K562 (cell line): ENCODE measurements at regions of chr19 and their contacts with region 1.

Region 1: DNA sequence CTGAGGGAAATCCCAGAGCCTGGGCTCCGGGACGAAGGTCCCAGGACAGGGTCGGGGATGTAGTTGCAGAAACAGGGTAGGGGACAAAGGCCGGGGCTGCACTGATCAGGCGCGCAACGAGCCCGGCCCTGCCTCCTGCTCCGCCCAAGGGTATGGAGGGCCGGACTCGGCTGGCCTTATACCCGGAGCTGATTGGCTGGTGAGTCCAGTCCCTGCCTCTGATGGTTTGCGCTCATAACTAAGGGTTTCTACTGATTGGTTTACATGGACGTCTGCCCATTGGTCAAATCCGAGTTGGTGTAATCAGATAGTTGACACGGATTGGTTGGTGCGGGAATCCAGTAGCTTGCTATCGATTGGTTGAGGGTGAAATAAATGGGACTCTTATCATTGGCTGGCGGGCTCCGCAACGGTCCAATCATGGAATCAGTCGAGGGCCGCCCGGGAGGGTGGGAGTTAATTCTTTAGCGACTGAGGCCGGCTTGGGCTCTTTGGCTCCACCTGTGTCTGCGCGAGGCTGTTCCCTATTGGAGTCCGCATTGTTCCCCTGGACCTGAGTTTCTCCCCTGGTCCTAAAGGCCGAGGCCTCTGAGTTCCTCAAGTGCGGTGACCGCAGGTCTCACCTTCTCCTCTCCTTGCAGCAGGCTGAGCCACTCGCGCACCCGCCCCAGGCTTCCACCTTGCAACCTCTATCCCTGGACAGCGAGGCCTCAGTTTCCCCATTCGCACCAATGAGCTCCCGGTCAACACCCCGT is 570 bp upstream of the MPND start:
- DNase-seq: peak; percentile 94 to 99 (median 96)
- ATAC-seq: peak; percentile 96
- H3K4me3 ChIP-seq: peak overlapping the region; percentile 77
- H3K27ac ChIP-seq: peak overlapping the region; percentile 89
- H3K4me1 ChIP-seq: peaks cover 13 to 41% of the 10 kb centered on the region in 2 experiments; a peak in 4 of 5 replicates
- H3K27me3 ChIP-seq: no peaks in the 10 kb centered on the region
- CTCF ChIP-seq: peak; percentile 42 to 53 (median 51); a peak in 5 of 6 replicates
- EP300 ChIP-seq: 0 out of 2 replicates have a peak, but pooled peaks have one; percentile 4
- POLR2A ChIP-seq: peak; percentile 87
- RAD21 ChIP-seq: no peak

Region 2: DNA sequence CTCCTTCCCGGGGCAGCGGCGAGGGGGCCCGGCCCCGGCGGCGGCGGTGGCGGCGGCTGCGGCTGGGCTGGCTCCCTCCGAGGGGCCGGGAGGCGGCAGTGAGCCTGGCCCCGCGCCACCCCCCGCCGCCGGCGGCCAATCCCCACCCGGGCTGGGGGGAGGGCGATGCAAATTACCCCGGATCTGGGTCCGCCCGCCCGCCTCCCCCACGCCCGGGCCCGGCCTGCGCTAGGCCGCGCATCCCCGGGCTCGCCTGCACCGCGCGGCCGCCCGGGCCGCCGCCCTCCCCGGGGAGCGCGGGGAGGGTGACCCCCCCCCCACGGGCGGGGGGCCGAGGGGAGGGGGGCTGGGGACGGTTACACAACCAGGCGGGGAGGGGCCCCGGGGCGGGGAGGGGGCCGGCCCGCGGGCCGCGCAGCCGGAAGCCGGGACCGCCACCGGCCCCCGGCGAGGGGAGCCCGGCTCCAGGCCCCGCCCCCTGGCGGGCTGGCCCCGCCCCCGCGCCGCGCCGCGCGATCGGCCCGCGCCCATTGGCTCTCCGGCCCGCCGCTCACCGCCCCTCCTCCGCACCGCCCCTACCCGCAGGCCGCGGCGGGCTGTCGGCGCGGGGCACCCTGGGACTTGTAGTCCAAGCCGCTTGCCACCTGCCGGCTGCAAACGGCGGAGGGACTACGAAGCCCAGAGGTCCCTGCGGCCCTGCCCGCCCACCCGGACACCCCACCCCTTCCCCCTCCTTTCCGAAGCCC is 277.2 kb before region 1 on chr19:
- CTCF ChIA-PET with region 1: no interaction called
- POLR2A ChIA-PET with region 1: no interaction called
- in situ Hi-C with region 1: no loop called
- intact Hi-C with region 1: no loop called
- DNase-seq: peak; percentile 89 to 99 (median 94)
- ATAC-seq: peak; percentile 84
- H3K4me3 ChIP-seq: peak overlapping the region; percentile 100
- H3K27ac ChIP-seq: peak overlapping the region; percentile 56; the same call in 1 of the 3 replicates
- H3K4me1 ChIP-seq: peaks cover 25 to 74% of the 10 kb centered on the region in 2 experiments
- H3K27me3 ChIP-seq: no peaks in the 10 kb centered on the region
- CTCF ChIP-seq: no peak
- EP300 ChIP-seq: no peak; the same call in 1 of the 2 replicates
- POLR2A ChIP-seq: no peak
- RAD21 ChIP-seq: no peak

Region 3: GRCh38 chr19:4278419-4279266 is 64.1 kb before region 1 on chr19 and contains the start of gene SHD:
- CTCF ChIA-PET with region 1: no interaction called
- POLR2A ChIA-PET with region 1: interaction called, 3 read pairs
- in situ Hi-C with region 1: loop called (anchors 10 kb)
- intact Hi-C with region 1: no loop called
- DNase-seq: peak in 3 of 4 experiments; percentile 32 to 67 (median 65)
- ATAC-seq: peak; percentile 75
- H3K4me3 ChIP-seq: no peak within 1 kb of the TSS
- H3K27ac ChIP-seq: no peak within 1 kb of the TSS
- H3K4me1 ChIP-seq: peaks cover 0 to 18% of the 10 kb centered on the region in 2 experiments; a peak in 4 of 5 replicates
- H3K27me3 ChIP-seq: peaks cover 16 to 24% of the 10 kb centered on the region in 2 experiments; a peak in 4 of 5 replicates
- CTCF ChIP-seq: no peak
- EP300 ChIP-seq: no peak
- POLR2A ChIP-seq: no peak
- RAD21 ChIP-seq: no peak
- polyA plus RNA-seq, gene SHD: 0.13 to 0.18 TPM